ENCODE measurements at regions of chr6 and their contacts with region 1.

Region 1: GRCh38 chr6:146884728-146885127 is 286.0 kb downstream of the ADGB start:
- DNase-seq: no peak
- H3K4me3 ChIP-seq: no peak overlapping the region
- H3K27ac ChIP-seq: no peak overlapping the region
- H3K4me1 ChIP-seq: no peaks in the 10 kb centered on the region
- H3K27me3 ChIP-seq: no peaks in the 10 kb centered on the region
- CTCF ChIP-seq: no peak
- POLR2A ChIP-seq: no peak

Region 2: DNA sequence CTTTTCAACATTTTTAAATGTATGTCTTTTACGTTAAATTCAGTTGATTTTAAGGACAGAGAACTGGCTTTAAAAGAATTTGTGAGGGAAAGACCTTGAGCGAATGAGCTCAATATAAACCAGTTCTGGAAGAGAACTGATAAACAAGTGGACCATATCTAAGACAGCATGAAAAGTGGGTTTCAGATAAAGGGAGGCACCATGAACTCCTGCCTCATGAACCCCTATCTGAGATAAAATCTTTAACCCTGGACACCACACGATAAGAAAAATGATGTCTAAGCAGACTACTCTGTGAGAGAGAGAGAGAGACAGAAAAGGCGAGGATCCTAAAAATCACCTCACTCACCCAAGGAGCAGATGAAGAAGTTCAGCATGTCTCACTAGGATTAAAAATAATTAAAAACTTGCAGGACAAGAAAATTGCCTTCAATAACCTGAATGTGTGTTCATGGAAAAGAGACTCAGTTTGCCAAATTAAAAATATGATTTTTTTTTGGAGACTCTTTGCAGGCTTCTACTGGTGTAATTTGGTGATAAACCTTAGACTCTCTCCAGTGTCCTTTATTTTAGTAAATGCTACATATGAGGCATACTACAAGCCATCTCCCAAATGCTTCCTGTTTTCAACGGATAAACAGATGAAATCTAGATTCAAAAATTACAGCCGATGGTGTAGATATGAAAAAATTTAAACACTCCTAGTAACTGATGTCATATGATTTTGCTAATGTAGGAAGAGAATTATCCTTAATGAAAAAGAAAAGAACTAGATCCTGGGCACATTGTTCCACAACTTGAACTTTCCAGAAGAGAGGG is 13.6 kb after region 1 on chr6:
- intact Hi-C with region 1: loop called (anchors 1 kb)
- DNase-seq: no peak
- H3K4me3 ChIP-seq: no peak overlapping the region
- H3K27ac ChIP-seq: no peak overlapping the region
- H3K4me1 ChIP-seq: no peaks in the 10 kb centered on the region
- H3K27me3 ChIP-seq: no peaks in the 10 kb centered on the region
- CTCF ChIP-seq: no peak
- POLR2A ChIP-seq: no peak

Measured in breast epithelium (tissue), 4 donors.